Activated T-helper 2 cell treated with anti-CD3 and anti-CD28 coated beads, Interferon-gamma antibody, Interleukin-2, Interleukin-4, amounts not matched to agents 10 μg/mL and 5 μg/mL and 100 μg/mL, durations not matched to agents 14 hours and 24 hours and 36 hours (primary cell): ENCODE measurements at regions of chr5 and their contacts with region 1.

Region 1: DNA sequence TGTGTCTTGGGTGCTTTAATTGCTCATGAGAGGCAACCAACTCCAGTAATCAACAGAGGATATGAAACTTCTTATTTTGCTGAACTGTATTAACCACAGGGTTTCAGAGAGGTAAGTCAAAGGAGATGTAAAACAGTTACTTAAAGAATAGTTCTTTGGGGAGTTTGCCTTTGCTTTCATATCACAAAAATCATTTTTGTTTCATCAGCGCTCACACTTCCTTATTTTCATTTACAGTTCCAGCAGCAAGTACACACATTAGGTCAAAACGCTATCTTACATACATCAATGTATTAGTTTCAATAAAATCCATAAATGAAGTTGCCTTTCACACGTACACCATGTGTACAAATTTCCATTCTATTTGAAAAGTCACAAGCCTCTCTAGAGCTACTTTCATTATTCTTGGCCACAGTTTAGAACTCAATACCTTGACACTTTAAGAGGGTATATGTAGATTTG is 50.1 kb downstream of the ST8SIA4 start:
- DNase-seq: no peak
- H3K4me3 Mint-ChIP-seq: peak overlapping the region; percentile 72
- H3K27ac Mint-ChIP-seq: peak overlapping the region; percentile 97
- H3K4me1 Mint-ChIP-seq: peaks cover 42% of the 10 kb centered on the region
- H3K27me3 Mint-ChIP-seq: no peaks in the 10 kb centered on the region

Region 2: GRCh38 chr5:100827481-100827889 is 25.5 kb before region 1 on chr5:
- intact Hi-C with region 1: loop called (anchors 2 kb)
- DNase-seq: no peak
- H3K4me3 Mint-ChIP-seq: no peak overlapping the region
- H3K27ac Mint-ChIP-seq: peak overlapping the region; percentile 79
- H3K4me1 Mint-ChIP-seq: peaks cover 40% of the 10 kb centered on the region
- H3K27me3 Mint-ChIP-seq: no peaks in the 10 kb centered on the region

Region 3: GRCh38 chr5:101123365-101123764 is 270.3 kb after region 1 on chr5:
- intact Hi-C with region 1: no loop called
- DNase-seq: no peak
- H3K4me3 Mint-ChIP-seq: no peak overlapping the region
- H3K27ac Mint-ChIP-seq: no peak overlapping the region
- H3K4me1 Mint-ChIP-seq: no peaks in the 10 kb centered on the region
- H3K27me3 Mint-ChIP-seq: no peaks in the 10 kb centered on the region

Region 4: DNA sequence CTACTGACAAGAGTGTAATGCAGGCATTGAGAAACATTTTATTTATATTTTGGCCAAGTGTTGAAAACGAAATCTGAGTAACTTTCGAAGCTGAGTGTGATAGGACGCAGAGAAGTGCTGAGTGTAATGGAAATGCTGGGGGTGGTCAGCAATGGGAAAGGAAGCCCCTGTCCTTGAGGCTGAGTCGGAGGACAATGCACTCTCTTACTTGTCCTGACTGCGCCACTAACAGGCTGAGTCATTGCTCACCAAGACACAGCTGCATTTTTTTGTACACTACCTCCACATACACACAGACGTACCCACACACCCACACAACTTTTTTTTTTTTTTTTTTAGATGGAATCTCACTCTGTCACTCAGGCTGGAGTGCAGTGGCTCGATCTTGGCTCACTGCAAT is 805.4 kb after region 1 on chr5:
- intact Hi-C with region 1: no loop called
- DNase-seq: no peak
- H3K4me3 Mint-ChIP-seq: no peak overlapping the region
- H3K27ac Mint-ChIP-seq: no peak overlapping the region
- H3K4me1 Mint-ChIP-seq: no peaks in the 10 kb centered on the region
- H3K27me3 Mint-ChIP-seq: no peaks in the 10 kb centered on the region